Activated naive CD4-positive, alpha-beta T cell treated with anti-CD3 and anti-CD28 coated beads for 36 hours (primary cell): ENCODE measurements at regions of chr14 and their contacts with region 1.

Region 1: GRCh38 chr14:71555654-71556559 is 376.3 kb upstream of the RGS6 start:
- DNase-seq: peak; percentile 80
- H3K4me3 Mint-ChIP-seq: peak overlapping the region; percentile 56
- H3K27ac Mint-ChIP-seq: peak overlapping the region; percentile 93
- H3K4me1 Mint-ChIP-seq: peaks cover 71% of the 10 kb centered on the region
- H3K27me3 Mint-ChIP-seq: no peaks in the 10 kb centered on the region

Region 2: GRCh38 chr14:70887207-70887681 is 668.7 kb before region 1 on chr14:
- CTCF ChIA-PET with region 1: no interaction called
- intact Hi-C with region 1: loop called (anchors 2 kb)
- DNase-seq: peak; percentile 41
- H3K4me3 Mint-ChIP-seq: peak overlapping the region; percentile 39
- H3K27ac Mint-ChIP-seq: peak overlapping the region; percentile 92
- H3K4me1 Mint-ChIP-seq: peaks cover 74% of the 10 kb centered on the region
- H3K27me3 Mint-ChIP-seq: peaks cover 2% of the 10 kb centered on the region

Region 3: GRCh38 chr14:71320107-71320733 is 235.7 kb before region 1 on chr14:
- CTCF ChIA-PET with region 1: interaction called, 3 read pairs
- intact Hi-C with region 1: loop called (anchors 1 kb)
- DNase-seq: peak; percentile 99
- H3K4me3 Mint-ChIP-seq: peak within 1 kb of the TSS; percentile 83
- H3K27ac Mint-ChIP-seq: peak within 1 kb of the TSS; percentile 71
- H3K4me1 Mint-ChIP-seq: peaks cover 39% of the 10 kb centered on the region
- H3K27me3 Mint-ChIP-seq: no peaks in the 10 kb centered on the region

Region 4: DNA sequence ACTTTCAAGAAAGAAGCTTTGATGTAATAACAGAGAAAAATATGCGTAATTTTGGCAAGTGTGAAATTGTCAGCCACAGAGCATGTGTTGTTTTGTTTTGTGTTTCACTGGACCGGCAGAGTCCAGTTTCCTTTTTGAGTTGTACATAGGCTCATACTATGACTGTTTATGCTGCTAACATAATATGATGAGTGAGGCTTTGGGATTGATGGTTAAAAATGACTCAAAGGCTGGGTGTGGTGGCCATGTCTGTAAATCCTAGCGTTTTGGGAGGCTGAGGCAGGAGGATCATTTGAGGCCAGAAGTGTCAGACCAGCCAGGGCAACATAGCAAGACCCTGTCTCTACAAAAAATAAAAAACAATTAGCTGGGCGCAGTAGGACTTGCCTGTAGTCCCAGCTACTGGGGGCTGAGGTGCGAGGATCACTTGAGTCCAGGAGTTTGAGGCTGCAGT is 160.7 kb before region 1 on chr14:
- CTCF ChIA-PET with region 1: interaction called, 3 read pairs
- intact Hi-C with region 1: loop called (anchors 1 kb)
- DNase-seq: peak; percentile 9
- H3K4me3 Mint-ChIP-seq: no peak overlapping the region
- H3K27ac Mint-ChIP-seq: peak overlapping the region; percentile 28
- H3K4me1 Mint-ChIP-seq: peaks cover 28% of the 10 kb centered on the region
- H3K27me3 Mint-ChIP-seq: no peaks in the 10 kb centered on the region

Region 5: DNA sequence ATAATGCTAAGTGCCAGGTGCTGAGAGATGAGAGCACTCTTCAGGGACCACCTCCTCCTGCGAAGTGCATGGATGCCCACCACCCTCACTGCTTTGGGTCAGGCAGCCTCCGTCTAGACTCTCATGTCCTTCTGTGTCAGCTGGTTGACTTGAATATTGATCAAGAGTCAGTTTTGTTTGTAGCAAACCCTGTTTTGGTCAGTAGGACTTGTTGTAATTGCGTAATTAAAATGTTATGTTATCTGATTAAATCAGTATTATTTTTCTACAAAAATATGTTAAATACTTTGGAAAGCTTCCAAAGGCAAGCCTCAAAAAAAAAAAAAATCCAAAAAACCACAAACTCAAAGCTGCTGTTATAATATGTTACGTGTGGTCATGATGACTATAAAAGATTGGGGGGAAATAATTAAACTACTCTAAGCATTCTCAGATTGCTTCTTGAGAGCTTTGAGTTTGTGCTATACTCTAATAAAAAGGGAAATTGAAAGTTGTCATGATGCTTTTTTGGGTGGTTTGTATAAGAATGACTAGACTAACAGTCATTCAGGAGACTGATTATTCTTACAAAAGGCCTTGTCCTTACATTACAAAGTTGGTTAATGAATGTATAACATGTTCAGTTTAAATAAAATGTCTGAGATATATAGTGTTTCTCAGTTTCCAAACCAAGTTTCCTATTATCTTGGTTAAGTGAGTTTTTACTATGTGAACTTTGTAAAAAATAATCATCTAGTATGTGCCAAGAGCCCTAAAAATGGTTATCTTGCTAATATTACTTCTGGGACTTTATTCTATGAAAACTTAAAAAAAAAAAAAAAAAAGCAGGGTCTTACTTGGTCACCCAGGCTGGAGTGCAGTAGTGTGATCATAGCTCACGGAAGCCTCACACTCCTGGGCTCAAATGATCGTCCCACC is 83.6 kb before region 1 on chr14:
- CTCF ChIA-PET with region 1: no interaction called
- intact Hi-C with region 1: loop called (anchors 1 kb)
- DNase-seq: no peak
- H3K4me3 Mint-ChIP-seq: no peak overlapping the region
- H3K27ac Mint-ChIP-seq: no peak overlapping the region
- H3K4me1 Mint-ChIP-seq: peaks cover 42% of the 10 kb centered on the region
- H3K27me3 Mint-ChIP-seq: no peaks in the 10 kb centered on the region

Region 6: GRCh38 chr14:71488703-71489191 is 67.2 kb before region 1 on chr14:
- CTCF ChIA-PET with region 1: no interaction called
- intact Hi-C with region 1: no loop called
- DNase-seq: no peak
- H3K4me3 Mint-ChIP-seq: no peak overlapping the region
- H3K27ac Mint-ChIP-seq: no peak overlapping the region
- H3K4me1 Mint-ChIP-seq: peaks cover 15% of the 10 kb centered on the region
- H3K27me3 Mint-ChIP-seq: no peaks in the 10 kb centered on the region

Region 7: DNA sequence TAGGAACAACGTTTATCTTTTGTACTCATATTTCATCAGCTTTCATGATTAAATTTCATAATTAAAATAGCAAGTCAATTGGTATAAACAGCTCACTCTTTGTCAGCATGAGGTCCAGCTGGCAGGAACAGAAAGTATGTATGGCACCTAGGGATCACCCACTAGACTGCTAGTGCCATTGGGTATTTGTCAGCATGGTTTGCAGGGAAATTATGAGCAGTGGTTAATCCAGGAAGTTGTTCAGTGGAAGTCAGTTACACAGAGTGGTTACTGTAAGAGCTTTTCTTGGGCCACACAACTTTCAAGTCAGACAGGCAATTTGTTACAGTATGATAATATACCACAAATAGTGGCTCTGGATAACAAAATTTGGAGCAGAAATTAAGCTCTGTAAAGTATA is 36.0 kb after region 1 on chr14:
- CTCF ChIA-PET with region 1: no interaction called
- intact Hi-C with region 1: loop called (anchors 1 kb)
- DNase-seq: peak; percentile 62
- H3K4me3 Mint-ChIP-seq: no peak overlapping the region
- H3K27ac Mint-ChIP-seq: peak overlapping the region; percentile 8
- H3K4me1 Mint-ChIP-seq: peaks cover 54% of the 10 kb centered on the region
- H3K27me3 Mint-ChIP-seq: no peaks in the 10 kb centered on the region

Region 8: GRCh38 chr14:71625891-71626701 is 70.2 kb after region 1 on chr14:
- CTCF ChIA-PET with region 1: no interaction called
- intact Hi-C with region 1: no loop called
- DNase-seq: no peak
- H3K4me3 Mint-ChIP-seq: no peak overlapping the region
- H3K27ac Mint-ChIP-seq: no peak overlapping the region
- H3K4me1 Mint-ChIP-seq: no peaks in the 10 kb centered on the region
- H3K27me3 Mint-ChIP-seq: no peaks in the 10 kb centered on the region

Region 9: DNA sequence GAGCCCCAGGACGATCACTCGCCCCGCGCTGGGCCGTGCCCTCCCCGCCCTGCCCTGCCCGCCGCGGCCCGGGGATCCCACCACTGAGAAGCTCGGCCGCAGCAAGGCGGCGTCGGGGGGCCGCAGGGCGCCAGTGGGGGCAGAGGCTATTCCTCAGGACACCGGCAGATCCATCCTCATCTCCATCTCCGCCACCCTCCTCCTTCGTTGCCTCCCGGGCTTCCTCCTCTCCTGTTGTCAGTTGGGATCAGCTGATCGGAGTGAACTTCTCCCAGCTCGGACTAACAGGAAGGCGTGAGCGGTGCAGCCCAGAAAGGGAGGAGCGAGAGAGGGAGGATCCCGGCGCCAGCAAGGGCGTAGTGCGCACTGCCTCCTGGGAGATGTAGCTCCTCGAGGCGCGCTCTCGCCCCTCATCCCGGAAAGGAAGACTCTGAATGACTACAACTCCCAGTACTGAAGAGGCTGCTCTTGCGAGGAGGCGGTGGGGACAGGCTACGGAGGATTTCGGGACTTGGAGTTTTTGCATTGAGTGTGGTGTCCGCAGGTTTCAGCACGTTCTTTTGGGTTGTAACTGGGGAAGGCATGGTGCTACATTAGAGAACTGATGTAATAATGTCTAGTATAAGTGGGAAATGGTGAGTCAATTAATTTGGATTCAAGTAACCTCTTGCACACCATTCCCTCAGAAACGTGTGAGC is 1471.1 kb after region 1 on chr14 and contains the start of gene ZFYVE1:
- CTCF ChIA-PET with region 1: no interaction called
- intact Hi-C with region 1: loop called (anchors 1 kb)
- DNase-seq: peak; percentile 97
- H3K4me3 Mint-ChIP-seq: peak within 1 kb of the TSS; percentile 92
- H3K27ac Mint-ChIP-seq: peak within 1 kb of the TSS; percentile 80
- H3K4me1 Mint-ChIP-seq: peaks cover 39% of the 10 kb centered on the region
- H3K27me3 Mint-ChIP-seq: no peaks in the 10 kb centered on the region
- total RNA-seq, gene ZFYVE1: 8.5 to 9.2 TPM